AG04450 (cell line): ENCODE measurements at regions of chr14 and their contacts with region 1.

Region 1: GRCh38 chr14:92686900-92687444 is 61.5 kb downstream of the LGMN start:
- DNase-seq: peak; percentile 13
- H3K4me3 ChIP-seq: no peak overlapping the region
- H3K27ac ChIP-seq: no peak overlapping the region
- H3K27me3 ChIP-seq: no peaks in the 10 kb centered on the region
- CTCF ChIP-seq: peak; percentile 95

Region 2: GRCh38 chr14:92520092-92520745 is 166.8 kb before region 1 on chr14:
- CTCF ChIA-PET with region 1: no interaction called
- POLR2A ChIA-PET with region 1: no interaction called
- DNase-seq: no peak
- H3K4me3 ChIP-seq: no peak overlapping the region
- H3K27ac ChIP-seq: no peak overlapping the region
- H3K27me3 ChIP-seq: no peaks in the 10 kb centered on the region
- CTCF ChIP-seq: no peak

Region 3: GRCh38 chr14:92675421-92675820 is 11.6 kb before region 1 on chr14:
- CTCF ChIA-PET with region 1: interaction called, 12 read pairs
- POLR2A ChIA-PET with region 1: no interaction called
- DNase-seq: no peak
- H3K4me3 ChIP-seq: no peak overlapping the region
- H3K27ac ChIP-seq: no peak overlapping the region
- H3K27me3 ChIP-seq: no peaks in the 10 kb centered on the region
- CTCF ChIP-seq: no peak

Region 4: DNA sequence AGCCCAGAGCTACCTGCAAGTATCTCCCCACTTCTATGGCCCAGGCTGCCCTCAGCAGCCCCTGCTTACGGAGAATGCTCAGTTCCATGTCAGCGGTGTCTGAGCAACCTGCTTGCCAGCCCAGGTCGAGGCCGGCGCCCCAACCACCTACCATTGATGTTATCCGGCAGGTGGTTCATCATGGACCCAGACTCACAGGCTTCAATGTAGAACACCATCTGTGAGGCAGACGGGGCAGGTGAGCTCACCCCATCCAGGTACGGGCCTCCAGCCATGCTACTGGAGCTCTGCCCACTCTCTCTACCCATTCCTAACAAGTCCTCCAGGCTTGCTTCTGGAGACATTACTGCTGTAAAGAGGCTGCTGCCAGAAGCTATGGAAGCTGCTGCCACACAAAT is 25.7 kb after region 1 on chr14:
- CTCF ChIA-PET with region 1: interaction called, 11 read pairs
- POLR2A ChIA-PET with region 1: no interaction called
- DNase-seq: no peak
- H3K4me3 ChIP-seq: no peak overlapping the region
- H3K27ac ChIP-seq: no peak overlapping the region
- H3K27me3 ChIP-seq: no peaks in the 10 kb centered on the region
- CTCF ChIP-seq: no peak

Region 5: DNA sequence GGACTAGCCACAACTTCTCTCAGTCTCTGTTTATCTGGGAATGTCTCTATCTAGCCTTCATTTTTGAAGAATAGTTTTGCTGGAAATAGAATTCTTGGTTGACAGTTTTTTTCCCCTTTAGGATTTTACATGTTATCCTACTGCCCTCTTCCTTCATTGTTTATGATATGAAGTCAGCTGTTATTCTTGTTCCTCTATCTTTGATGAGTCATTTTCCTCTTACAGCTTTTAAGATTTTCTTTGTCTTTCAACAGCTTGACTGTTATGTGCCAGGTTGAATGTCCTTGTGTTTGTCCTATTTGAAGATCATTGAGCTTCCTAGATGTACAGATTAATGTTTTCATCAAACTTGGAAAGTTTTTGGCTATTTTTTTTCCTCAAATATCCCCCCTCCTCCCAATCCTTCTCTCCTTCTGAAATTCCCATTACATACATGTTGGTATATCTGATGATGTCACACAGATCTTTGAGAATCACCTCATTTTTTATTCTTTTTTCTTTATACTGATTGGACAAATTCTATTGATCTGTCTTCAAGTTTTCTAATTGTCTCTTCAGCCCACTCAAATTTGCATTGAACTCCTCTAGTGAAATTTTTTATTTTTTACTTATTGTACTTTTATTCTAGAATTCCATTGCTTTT is 102.6 kb after region 1 on chr14:
- CTCF ChIA-PET with region 1: interaction called, 164 read pairs
- POLR2A ChIA-PET with region 1: interaction called, 3 read pairs
- DNase-seq: no peak
- H3K4me3 ChIP-seq: no peak overlapping the region
- H3K27ac ChIP-seq: no peak overlapping the region
- H3K27me3 ChIP-seq: no peaks in the 10 kb centered on the region
- CTCF ChIP-seq: no peak